CD8-positive, alpha-beta T cell (primary cell): ENCODE measurements at regions of chr21 and their contacts with region 1.

Region 1: DNA sequence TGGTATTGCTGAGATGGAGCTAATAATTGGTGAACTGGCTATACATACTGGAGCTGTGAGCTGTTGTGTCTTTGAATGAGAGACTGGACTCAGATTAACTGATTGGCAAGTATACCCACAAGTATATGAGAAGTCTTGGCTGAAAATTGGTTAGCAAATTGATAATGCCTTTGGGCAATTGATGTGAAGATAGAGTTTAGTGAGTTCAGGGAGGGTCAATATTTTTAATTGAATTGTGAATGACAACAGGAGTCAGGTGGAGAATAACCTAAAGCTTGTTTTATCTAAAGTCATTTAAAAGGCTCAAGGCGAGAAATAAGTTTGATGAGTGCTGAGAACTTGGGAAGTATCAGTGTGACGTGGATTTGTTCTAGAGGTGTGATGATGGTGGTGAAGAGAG is 27.5 kb downstream of the NCAM2 start:
- DNase-seq: no peak
- ATAC-seq: no peak
- H3K4me3 ChIP-seq: no peak overlapping the region
- H3K4me3 Mint-ChIP-seq: no peak overlapping the region
- H3K27ac ChIP-seq: no peak overlapping the region
- H3K27ac Mint-ChIP-seq: no peak overlapping the region
- H3K4me1 ChIP-seq: no peaks in the 10 kb centered on the region
- H3K4me1 Mint-ChIP-seq: no peaks in the 10 kb centered on the region
- H3K27me3 ChIP-seq: no peaks in the 10 kb centered on the region
- H3K27me3 Mint-ChIP-seq: no peaks in the 10 kb centered on the region
- CTCF ChIP-seq: no peak

Region 2: DNA sequence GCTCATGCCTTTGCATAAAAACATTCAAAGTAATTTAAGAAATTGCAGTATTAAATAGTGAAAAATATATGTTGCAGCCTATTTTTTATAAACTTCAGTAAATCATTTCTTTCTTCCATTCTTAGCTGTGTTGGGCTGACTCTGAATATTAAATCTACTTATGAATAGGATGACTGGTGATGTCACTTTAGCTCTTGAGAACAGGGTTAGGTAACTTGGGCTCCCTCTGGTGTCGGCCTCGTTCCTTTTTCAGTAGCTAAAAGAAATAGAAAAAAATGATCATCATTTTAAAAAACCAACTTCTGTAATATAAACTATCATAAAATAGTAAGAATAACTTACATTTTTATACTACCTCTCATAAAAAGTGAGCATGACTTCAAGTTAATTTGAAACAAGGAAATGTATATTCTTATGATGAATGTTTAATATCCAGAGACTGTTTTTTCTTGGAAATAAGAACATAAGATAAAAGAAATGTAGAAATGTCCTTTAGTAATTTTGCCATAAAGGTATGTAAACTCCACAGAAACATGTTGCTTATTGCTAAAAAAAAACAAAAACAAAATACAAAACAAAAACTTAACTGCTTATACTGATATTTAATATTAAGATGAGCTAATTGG is 54.3 kb before region 1 on chr21:
- CTCF ChIA-PET with region 1: no interaction called
- POLR2A ChIA-PET with region 1: no interaction called
- intact Hi-C with region 1: no loop called
- DNase-seq: peak in 2 of 9 experiments; percentile 2 to 10
- ATAC-seq: no peak
- H3K4me3 ChIP-seq: no peak overlapping the region
- H3K4me3 Mint-ChIP-seq: no peak overlapping the region
- H3K27ac ChIP-seq: no peak overlapping the region
- H3K27ac Mint-ChIP-seq: no peak overlapping the region
- H3K4me1 ChIP-seq: no peaks in the 10 kb centered on the region
- H3K4me1 Mint-ChIP-seq: no peaks in the 10 kb centered on the region
- H3K27me3 ChIP-seq: no peaks in the 10 kb centered on the region
- H3K27me3 Mint-ChIP-seq: no peaks in the 10 kb centered on the region
- CTCF ChIP-seq: no peak

Region 3: DNA sequence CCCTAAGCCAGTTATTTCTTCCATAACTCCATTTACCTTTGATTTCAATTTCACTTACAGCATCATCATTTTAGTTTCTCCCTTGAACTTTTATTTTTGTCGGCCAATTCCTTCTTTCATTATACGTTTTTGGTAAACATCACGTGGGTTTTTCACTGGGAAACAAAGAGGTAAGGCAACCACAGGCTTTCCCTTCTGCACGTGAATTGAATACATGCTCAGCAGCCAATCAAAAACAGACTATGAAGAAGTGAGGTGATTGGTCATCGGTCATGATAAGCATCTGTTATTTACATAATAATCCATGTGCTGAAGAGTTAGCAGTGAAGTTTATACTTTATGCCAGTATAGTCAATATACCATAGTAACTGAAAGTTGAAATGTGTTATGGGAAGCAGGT is 71.2 kb after region 1 on chr21:
- CTCF ChIA-PET with region 1: no interaction called
- POLR2A ChIA-PET with region 1: no interaction called
- intact Hi-C with region 1: loop called in 1 of 2 experiments (anchors 2 kb)
- DNase-seq: no peak
- ATAC-seq: no peak
- H3K4me3 ChIP-seq: no peak overlapping the region
- H3K4me3 Mint-ChIP-seq: no peak overlapping the region
- H3K27ac ChIP-seq: no peak overlapping the region
- H3K27ac Mint-ChIP-seq: no peak overlapping the region
- H3K4me1 ChIP-seq: no peaks in the 10 kb centered on the region
- H3K4me1 Mint-ChIP-seq: no peaks in the 10 kb centered on the region
- H3K27me3 ChIP-seq: no peaks in the 10 kb centered on the region
- H3K27me3 Mint-ChIP-seq: no peaks in the 10 kb centered on the region
- CTCF ChIP-seq: no peak